PC-3 (cell line): ENCODE measurements at regions of chr1 and their contacts with region 1.

Region 1: DNA sequence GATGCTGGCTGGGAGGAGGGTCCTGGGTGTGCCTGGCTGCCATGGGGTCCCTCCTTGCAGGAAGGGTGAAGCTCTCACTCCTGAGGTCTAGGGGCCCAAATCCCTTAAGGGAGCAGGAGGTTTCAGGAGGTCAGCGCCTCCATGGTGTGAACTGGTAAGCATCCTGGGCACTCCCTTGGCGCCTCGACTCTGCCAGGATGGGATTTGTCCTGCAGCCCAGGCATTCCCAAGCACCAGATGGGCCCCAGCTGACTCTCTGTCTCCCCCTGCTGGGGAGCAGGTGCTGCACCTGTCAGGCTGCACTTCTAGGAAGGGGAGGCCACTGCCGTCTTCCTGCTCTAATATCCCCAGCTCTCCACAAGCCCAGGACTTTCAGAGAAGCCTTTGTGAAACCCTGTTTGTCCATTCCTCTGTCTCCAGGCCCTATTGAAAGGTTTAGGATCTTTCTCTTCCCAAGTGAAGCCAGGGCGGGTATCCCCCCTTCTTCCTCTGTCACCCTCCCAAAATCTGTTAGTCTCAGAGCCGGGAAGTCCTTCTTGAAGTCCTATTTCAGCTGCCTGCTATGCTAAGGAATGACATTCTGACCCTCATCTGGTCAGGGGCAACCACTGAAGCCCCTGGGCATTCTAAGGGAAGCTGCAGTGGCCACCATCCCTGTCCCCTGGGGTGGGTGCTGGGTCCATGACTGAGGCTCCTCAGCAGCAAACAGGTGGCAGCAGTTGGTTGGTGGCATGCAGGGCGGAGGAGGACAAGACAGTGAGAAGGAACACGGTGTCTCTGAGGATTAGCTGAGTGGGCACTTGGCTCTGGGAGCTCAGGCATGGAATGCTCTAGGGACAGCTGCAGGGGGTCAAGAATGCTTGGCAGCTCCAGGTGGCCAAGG is 3.3 kb downstream of the MYBPH start:
- DNase-seq: peak; percentile 81
- ATAC-seq: peak; percentile 84
- H3K4me3 ChIP-seq: no peak overlapping the region
- H3K27ac ChIP-seq: no peak overlapping the region
- H3K4me1 ChIP-seq: peaks cover 6% of the 10 kb centered on the region
- H3K27me3 ChIP-seq: no peaks in the 10 kb centered on the region
- CTCF ChIP-seq: peak; percentile 86

Region 2: GRCh38 chr1:202750758-202751157 is 421.6 kb before region 1 on chr1:
- CTCF ChIA-PET with region 1: no interaction called
- POLR2A ChIA-PET with region 1: no interaction called
- intact Hi-C with region 1: no loop called
- DNase-seq: peak; percentile 11
- ATAC-seq: no peak
- H3K4me3 ChIP-seq: no peak overlapping the region
- H3K27ac ChIP-seq: no peak overlapping the region
- H3K4me1 ChIP-seq: no peaks in the 10 kb centered on the region
- H3K27me3 ChIP-seq: no peaks in the 10 kb centered on the region
- CTCF ChIP-seq: peak; percentile 36

Region 3: DNA sequence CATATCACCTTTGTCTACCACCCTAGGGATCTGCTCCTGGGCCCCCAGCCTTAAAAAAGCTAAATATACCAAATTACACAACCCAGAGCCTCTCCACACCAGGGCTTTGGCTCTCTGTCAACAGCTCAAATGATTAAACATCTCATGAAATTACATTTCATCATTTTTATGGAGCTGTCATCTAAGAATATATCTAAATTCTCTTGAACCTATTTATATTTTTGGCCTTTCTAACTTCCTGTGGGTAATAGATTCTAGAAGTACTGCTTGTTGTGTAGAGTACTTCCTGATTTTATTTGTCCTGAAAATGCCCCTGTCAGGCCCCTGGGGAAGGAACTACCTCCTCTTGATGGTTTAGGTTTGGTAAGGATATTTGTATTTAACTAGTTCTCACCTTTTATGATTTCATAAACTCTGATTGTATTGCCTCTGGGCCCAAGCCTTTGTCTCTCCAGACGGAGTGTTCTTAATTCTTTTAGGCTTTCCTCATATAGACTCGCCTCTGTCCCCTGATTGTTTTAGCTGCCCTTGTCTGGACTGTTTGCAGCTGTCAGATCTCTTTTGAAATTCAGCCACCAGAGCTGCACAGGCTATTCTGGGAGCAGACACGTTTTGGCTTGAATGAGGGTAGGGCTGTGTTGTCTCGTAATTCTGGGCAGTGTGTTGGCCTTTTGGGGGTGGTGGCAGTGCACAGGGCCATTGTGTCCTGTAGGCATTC is 103.2 kb before region 1 on chr1:
- CTCF ChIA-PET with region 1: no interaction called
- POLR2A ChIA-PET with region 1: no interaction called
- intact Hi-C with region 1: no loop called
- DNase-seq: no peak
- ATAC-seq: no peak
- H3K4me3 ChIP-seq: no peak overlapping the region
- H3K27ac ChIP-seq: no peak overlapping the region
- H3K4me1 ChIP-seq: no peaks in the 10 kb centered on the region
- H3K27me3 ChIP-seq: no peaks in the 10 kb centered on the region
- CTCF ChIP-seq: no peak

Region 4: GRCh38 chr1:203117611-203118575 is 54.5 kb before region 1 on chr1:
- CTCF ChIA-PET with region 1: interaction called, 31 read pairs
- POLR2A ChIA-PET with region 1: no interaction called
- intact Hi-C with region 1: loop called (anchors 2 kb)
- DNase-seq: peak; percentile 70
- ATAC-seq: peak; percentile 98
- H3K4me3 ChIP-seq: no peak overlapping the region
- H3K27ac ChIP-seq: no peak overlapping the region
- H3K4me1 ChIP-seq: no peaks in the 10 kb centered on the region
- H3K27me3 ChIP-seq: peaks cover 54% of the 10 kb centered on the region
- CTCF ChIP-seq: peak; percentile 90